ENCODE measurements at regions of chr7 and their contacts with region 1.

Region 1: DNA sequence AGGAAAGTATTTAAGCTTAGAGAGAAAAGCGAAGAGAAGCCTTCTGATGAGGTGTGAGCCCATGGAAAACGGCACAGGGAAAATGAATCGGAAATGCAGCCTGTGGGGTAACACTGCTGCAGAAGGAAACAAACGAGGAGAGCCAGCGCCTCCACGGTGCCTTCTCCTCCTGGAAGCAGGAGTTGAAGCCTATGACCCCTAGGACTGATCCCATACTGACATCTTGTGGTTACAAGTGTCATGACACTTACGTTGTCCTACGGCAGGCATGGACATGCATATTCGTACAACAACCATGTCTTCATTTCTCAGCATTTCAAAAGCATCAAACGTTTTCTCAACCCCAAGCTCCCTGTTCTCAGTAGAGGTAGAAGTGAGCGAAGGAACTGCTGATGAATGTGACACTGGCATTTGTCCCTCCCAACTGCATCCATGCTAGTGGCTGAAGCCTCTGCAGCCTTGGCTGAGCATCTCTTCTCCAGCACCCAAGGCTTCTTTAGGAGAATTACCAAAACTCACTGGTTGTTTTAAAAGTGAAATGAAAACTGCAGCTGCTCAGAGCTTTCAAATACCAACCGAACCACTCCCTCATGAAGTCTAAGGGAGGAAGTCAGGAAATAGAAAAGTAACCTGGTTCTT is 160.2 kb downstream of the JAZF1 start:
- DNase-seq: peak; percentile 64
- ATAC-seq: peak; percentile 98
- H3K4me3 ChIP-seq: no peak overlapping the region
- H3K27ac ChIP-seq: no peak overlapping the region
- H3K4me1 ChIP-seq: peaks cover 0 to 13% of the 10 kb centered on the region in 2 experiments; a peak in 1 of 4 replicates
- H3K27me3 ChIP-seq: no peaks in the 10 kb centered on the region
- CTCF ChIP-seq: peak; percentile 77 to 95 (median 86)
- POLR2A ChIP-seq: no peak
- RAD21 ChIP-seq: peak; percentile 98

Region 2: GRCh38 chr7:27576360-27576944 is 444.0 kb before region 1 on chr7:
- CTCF ChIA-PET with region 1: no interaction called
- POLR2A ChIA-PET with region 1: no interaction called
- RAD21 ChIA-PET with region 1: no interaction called
- intact Hi-C with region 1: loop called (anchors 10 kb)
- DNase-seq: peak; percentile 29
- ATAC-seq: peak; percentile 64
- H3K4me3 ChIP-seq: no peak overlapping the region
- H3K27ac ChIP-seq: no peak overlapping the region
- H3K4me1 ChIP-seq: no peaks in the 10 kb centered on the region
- H3K27me3 ChIP-seq: no peaks in the 10 kb centered on the region
- CTCF ChIP-seq: peak; percentile 37 to 75 (median 60); a peak in 4 of 6 replicates
- POLR2A ChIP-seq: no peak
- RAD21 ChIP-seq: peak; percentile 70

Region 3: DNA sequence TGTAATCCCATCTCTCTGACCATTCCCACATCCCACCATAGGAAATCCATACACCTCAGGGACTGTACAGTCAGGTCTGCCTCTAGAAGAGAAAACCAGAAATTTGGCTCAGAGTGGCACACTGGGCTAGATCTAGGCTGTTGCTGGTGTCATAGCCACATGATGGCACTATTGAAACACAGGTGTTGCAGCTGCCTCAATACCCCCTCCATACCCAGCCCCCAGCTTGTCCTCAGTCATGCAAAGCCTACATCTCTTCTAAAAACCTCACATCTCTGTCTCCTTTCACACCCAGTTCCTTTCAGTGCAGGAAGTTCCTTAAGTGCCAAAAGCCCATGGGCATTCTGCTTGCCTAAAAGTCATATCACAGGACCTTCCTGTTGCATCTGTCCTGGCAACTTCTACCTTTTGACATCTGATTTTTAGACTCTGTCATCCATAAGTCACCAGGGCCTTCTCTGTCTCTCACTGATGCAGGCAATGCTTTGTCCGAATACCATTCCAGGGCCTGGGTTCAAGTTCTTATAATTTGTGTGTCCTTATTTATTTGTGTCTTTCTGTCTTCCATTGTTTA is 330.7 kb before region 1 on chr7:
- CTCF ChIA-PET with region 1: interaction called, 6 read pairs
- POLR2A ChIA-PET with region 1: no interaction called
- RAD21 ChIA-PET with region 1: no interaction called
- intact Hi-C with region 1: loop called (anchors 1 kb)
- DNase-seq: no peak
- ATAC-seq: peak; percentile 95
- H3K4me3 ChIP-seq: no peak overlapping the region
- H3K27ac ChIP-seq: no peak overlapping the region
- H3K4me1 ChIP-seq: peaks cover 0 to 13% of the 10 kb centered on the region in 2 experiments; a peak in 2 of 4 replicates
- H3K27me3 ChIP-seq: no peaks in the 10 kb centered on the region
- CTCF ChIP-seq: peak; percentile 53 to 69 (median 66)
- POLR2A ChIP-seq: no peak
- RAD21 ChIP-seq: peak; percentile 85

Region 4: GRCh38 chr7:27784393-27785053 is 235.9 kb before region 1 on chr7:
- CTCF ChIA-PET with region 1: no interaction called
- POLR2A ChIA-PET with region 1: no interaction called
- RAD21 ChIA-PET with region 1: no interaction called
- intact Hi-C with region 1: loop called (anchors 5 kb)
- DNase-seq: peak; percentile 76
- ATAC-seq: peak; percentile 87
- H3K4me3 ChIP-seq: no peak overlapping the region
- H3K27ac ChIP-seq: no peak overlapping the region
- H3K4me1 ChIP-seq: peaks cover 4 to 13% of the 10 kb centered on the region in 2 experiments; a peak in 3 of 4 replicates
- H3K27me3 ChIP-seq: no peaks in the 10 kb centered on the region
- CTCF ChIP-seq: peak; percentile 53 to 74 (median 55); a peak in 5 of 6 replicates
- POLR2A ChIP-seq: no peak
- RAD21 ChIP-seq: peak; percentile 57

Measured in HCT116 (cell line).